Heart left ventricle (tissue), 16 donors: ENCODE measurements at regions of chr11 and their contacts with region 1.

Region 1: GRCh38 chr11:14506532-14506931 is 6.9 kb upstream of the COPB1 start:
- DNase-seq: no peak
- ATAC-seq: no peak
- H3K4me3 ChIP-seq: no peak overlapping the region
- H3K27ac ChIP-seq: no peak overlapping the region
- H3K4me1 ChIP-seq: no peaks in the 10 kb centered on the region
- H3K27me3 ChIP-seq: no peaks in the 10 kb centered on the region
- CTCF ChIP-seq: no peak
- POLR2A ChIP-seq: no peak

Region 2: DNA sequence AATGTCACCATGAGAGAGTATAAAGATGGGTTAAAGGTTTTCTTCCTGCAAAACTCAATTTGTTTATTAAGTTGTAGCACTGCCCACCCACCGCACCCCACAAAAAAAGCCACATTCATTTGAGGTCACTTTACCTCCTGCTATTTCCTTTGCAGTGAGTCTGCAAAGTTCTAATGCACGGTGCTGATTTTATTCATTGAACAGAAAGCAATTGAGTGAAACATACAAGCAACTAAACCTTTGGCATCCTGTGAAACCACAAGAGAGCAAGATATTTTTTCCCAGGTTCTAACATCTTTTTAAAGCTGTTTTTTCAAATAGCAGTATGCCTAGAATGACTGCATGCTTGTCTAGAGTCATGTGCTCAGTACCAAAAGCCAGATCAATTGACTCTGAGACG is 186.5 kb before region 1 on chr11:
- intact Hi-C with region 1: no loop called
- DNase-seq: no peak
- ATAC-seq: no peak
- H3K4me3 ChIP-seq: no peak overlapping the region
- H3K27ac ChIP-seq: no peak overlapping the region
- H3K4me1 ChIP-seq: peaks cover 0 to 19% (median 6%) of the 10 kb centered on the region in 12 donors
- H3K27me3 ChIP-seq: no peaks in the 10 kb centered on the region
- CTCF ChIP-seq: no peak
- POLR2A ChIP-seq: no peak

Region 3: DNA sequence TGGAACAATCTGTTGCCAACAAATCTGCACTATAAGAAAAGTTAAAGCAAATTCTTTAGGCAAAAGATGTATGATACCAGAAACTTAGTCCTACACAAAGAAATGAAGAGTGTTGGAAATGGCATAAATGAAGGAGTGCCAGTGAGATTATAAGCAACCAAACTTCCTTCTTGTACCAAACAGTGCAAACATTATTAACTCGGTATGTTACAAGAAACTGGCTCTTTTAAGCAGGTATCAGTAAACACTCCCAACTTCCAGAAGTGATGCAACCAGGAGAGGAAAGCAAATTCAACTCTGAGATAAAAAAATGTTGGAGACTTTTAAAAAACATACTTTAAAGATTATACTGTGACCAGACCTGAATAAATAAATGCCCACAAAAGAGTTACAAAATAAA is 35.4 kb before region 1 on chr11:
- intact Hi-C with region 1: loop called in 2 of 10 experiments (anchors 5 to 10 kb)
- DNase-seq: no peak
- ATAC-seq: no peak
- H3K4me3 ChIP-seq: no peak overlapping the region
- H3K27ac ChIP-seq: no peak overlapping the region
- H3K4me1 ChIP-seq: peaks cover 0 to 10% (median 0%) of the 10 kb centered on the region in 12 donors
- H3K27me3 ChIP-seq: no peaks in the 10 kb centered on the region
- CTCF ChIP-seq: no peak
- POLR2A ChIP-seq: no peak